MCF 10A (cell line): ENCODE measurements at regions of chr10 and their contacts with region 1.

Region 1: DNA sequence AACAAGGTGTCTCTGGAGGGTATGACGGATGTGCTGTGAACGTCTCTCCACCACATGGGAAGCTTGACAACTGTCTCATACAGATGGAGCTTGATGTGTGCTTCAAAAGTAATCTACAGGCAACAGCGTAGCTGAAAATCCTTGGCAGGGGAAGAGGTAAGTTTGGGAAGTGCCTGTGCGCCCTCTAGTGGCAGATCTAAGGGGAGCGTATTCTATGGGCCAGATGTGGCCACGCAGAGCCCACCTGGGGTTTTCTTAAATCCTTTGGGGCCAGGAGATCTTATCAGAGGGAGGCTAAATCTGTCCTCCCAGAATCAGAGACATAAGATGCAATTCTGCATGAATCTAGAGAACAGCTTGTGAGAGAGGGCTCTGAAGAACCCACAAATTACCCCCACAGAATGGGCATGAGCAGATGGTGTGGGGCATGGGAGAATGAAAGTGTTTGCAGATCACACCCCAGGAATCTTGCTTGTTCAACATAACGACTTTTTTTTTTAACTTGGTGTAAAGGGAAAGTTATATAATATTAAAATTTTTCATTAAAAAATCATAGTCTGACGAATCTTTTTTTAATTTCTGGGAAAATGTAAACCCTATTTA is 91.2 kb upstream of the MPP7 start:
- DNase-seq: peak; percentile 76
- H3K4me3 Mint-ChIP-seq: no peak overlapping the region
- H3K27ac Mint-ChIP-seq: no peak overlapping the region
- H3K4me1 Mint-ChIP-seq: peaks cover 5% of the 10 kb centered on the region
- H3K27me3 Mint-ChIP-seq: no peaks in the 10 kb centered on the region
- CTCF ChIP-seq: peak; percentile 86

Region 2: GRCh38 chr10:29191674-29192073 is 797.6 kb after region 1 on chr10:
- CTCF ChIA-PET with region 1: no interaction called
- POLR2A ChIA-PET with region 1: no interaction called
- intact Hi-C with region 1: loop called (anchors 5 kb)
- DNase-seq: no peak
- H3K4me3 Mint-ChIP-seq: no peak overlapping the region
- H3K27ac Mint-ChIP-seq: no peak overlapping the region
- H3K4me1 Mint-ChIP-seq: no peaks in the 10 kb centered on the region
- H3K27me3 Mint-ChIP-seq: peaks cover 12% of the 10 kb centered on the region
- CTCF ChIP-seq: no peak